T-cell (primary cell): ENCODE measurements at regions of chr14 and their contacts with region 1.

Region 1: DNA sequence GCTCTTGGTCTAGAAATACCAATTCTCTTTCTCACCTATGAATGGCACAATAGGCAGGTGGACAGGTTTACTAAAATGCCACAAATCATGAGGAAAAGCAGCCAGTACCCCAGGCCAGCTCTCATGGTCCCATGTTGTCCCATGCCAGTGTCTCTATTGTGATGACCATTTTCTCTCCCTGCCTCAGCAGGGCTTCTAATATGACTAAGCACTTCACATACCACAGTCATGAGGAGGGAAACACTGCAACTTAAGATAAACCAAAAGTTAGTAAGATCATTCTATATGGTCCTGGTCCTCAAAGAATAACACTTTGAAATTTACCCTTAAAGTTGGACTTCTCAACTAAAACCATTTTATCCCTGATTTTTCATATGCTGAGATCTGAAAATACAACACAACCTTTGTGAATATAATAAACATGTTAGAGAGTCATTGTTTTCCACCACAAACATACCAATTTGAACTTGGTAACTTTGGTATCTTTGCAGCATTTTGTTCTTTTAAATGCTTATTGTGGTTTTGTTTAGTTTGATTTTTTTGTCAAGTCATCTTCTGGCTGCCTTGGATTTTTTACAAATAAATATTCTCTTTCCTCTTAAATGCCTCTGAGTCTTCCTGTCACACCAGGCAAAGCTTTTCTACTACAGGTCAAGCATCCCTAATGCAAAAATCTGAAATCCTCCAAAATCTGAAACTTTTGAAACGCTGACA is 3.6 kb downstream of the TTC5 start:
- DNase-seq: no peak
- ATAC-seq: no peak
- H3K4me3 ChIP-seq: no peak overlapping the region
- H3K4me3 Mint-ChIP-seq: no peak overlapping the region
- H3K27ac ChIP-seq: no peak overlapping the region
- H3K27ac Mint-ChIP-seq: peak overlapping the region in 1 of 2 donors; percentile 8
- H3K4me1 ChIP-seq: peaks cover 6 to 12% of the 10 kb centered on the region in 2 experiments
- H3K4me1 Mint-ChIP-seq: peaks cover 34 to 43% (median 36%) of the 10 kb centered on the region in 3 donors
- H3K27me3 ChIP-seq: no peaks in the 10 kb centered on the region
- H3K27me3 Mint-ChIP-seq: no peaks in the 10 kb centered on the region

Region 2: GRCh38 chr14:20317720-20318119 is 15.5 kb after region 1 on chr14:
- CTCF ChIA-PET with region 1: interaction called in 1 of 2 experiments, 10 read pairs
- POLR2A ChIA-PET with region 1: no interaction called
- DNase-seq: no peak
- ATAC-seq: no peak
- H3K4me3 ChIP-seq: no peak overlapping the region
- H3K4me3 Mint-ChIP-seq: no peak overlapping the region
- H3K27ac ChIP-seq: no peak overlapping the region
- H3K27ac Mint-ChIP-seq: no peak overlapping the region
- H3K4me1 ChIP-seq: no peaks in the 10 kb centered on the region
- H3K4me1 Mint-ChIP-seq: no peaks in the 10 kb centered on the region
- H3K27me3 ChIP-seq: no peaks in the 10 kb centered on the region
- H3K27me3 Mint-ChIP-seq: no peaks in the 10 kb centered on the region

Region 3: GRCh38 chr14:20334017-20334416 is 31.8 kb after region 1 on chr14:
- CTCF ChIA-PET with region 1: no interaction called
- POLR2A ChIA-PET with region 1: no interaction called
- DNase-seq: no peak
- ATAC-seq: no peak
- H3K4me3 ChIP-seq: no peak overlapping the region
- H3K4me3 Mint-ChIP-seq: no peak overlapping the region
- H3K27ac ChIP-seq: no peak overlapping the region
- H3K27ac Mint-ChIP-seq: no peak overlapping the region
- H3K4me1 ChIP-seq: peaks cover 7% of the 10 kb centered on the region in 2 experiments
- H3K4me1 Mint-ChIP-seq: peaks cover 27 to 33% (median 30%) of the 10 kb centered on the region in 3 donors
- H3K27me3 ChIP-seq: no peaks in the 10 kb centered on the region
- H3K27me3 Mint-ChIP-seq: no peaks in the 10 kb centered on the region

Region 4: DNA sequence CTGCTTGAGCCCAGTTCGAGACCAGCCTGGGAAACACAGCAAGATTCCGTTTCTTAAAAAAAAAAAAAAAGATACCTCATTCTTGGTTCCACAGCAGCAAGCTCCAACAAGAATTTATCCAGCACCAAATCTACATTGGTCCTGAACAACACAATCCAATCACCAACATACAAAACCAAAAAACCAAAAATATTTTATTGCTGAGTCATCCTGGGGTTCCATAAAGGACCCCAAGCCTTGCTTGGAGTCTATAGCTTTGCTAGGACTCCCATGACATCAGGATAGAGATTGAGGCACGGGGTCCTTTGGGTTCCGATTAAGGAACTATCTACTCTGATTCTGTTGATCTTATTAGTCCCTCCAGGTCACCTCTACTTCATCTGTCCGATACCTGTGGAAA is 144.7 kb after region 1 on chr14:
- CTCF ChIA-PET with region 1: no interaction called
- POLR2A ChIA-PET with region 1: no interaction called
- DNase-seq: no peak
- ATAC-seq: no peak
- H3K4me3 ChIP-seq: no peak overlapping the region
- H3K4me3 Mint-ChIP-seq: no peak overlapping the region
- H3K27ac ChIP-seq: no peak overlapping the region
- H3K27ac Mint-ChIP-seq: peak overlapping the region; percentile 16 to 44
- H3K4me1 ChIP-seq: peaks cover 1% of the 10 kb centered on the region in 2 experiments
- H3K4me1 Mint-ChIP-seq: peaks cover 3 to 9% (median 3%) of the 10 kb centered on the region in 3 donors
- H3K27me3 ChIP-seq: no peaks in the 10 kb centered on the region
- H3K27me3 Mint-ChIP-seq: no peaks in the 10 kb centered on the region